HEK293 (cell line): ENCODE measurements at regions of chr13 and their contacts with region 1.

Region 1: GRCh38 chr13:37109051-37109678 is 3.7 kb upstream of the CSNK1A1L start:
- H3K4me3 ChIP-seq: no peak overlapping the region
- H3K27ac ChIP-seq: no peak overlapping the region
- H3K4me1 ChIP-seq: no peaks in the 10 kb centered on the region
- CTCF ChIP-seq: no peak

Region 2: DNA sequence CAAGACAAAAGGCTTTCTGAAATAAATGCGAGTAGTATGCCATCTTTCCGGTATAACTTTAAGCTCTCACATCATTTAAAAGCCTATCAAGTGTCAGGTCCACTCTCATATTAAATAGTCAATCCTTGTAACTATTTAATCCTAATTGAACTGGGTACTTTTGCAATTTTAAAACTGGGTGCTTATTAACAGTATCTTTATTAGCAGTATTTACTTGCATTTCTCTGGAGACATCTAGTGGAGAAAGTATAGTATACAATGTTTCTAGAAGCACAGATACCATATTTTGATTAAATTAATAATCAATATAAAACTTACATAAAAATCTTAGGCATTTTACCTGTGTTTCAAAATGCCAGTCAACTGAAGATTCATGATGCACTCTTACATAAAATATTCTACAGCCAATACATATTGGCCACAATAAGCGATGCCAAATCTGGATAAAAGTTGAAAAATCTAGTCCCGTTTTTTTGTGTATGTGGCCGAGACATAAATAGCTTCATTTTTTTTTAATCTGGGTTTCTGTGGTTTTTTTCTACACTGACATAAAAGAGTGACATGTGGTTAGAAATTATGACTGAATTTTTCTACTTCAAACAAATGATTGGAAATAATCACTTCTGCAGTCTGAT is 493.7 kb after region 1 on chr13:
- CTCF ChIA-PET with region 1: interaction called, 10 read pairs
- POLR2A ChIA-PET with region 1: no interaction called
- H3K4me3 ChIP-seq: no peak overlapping the region
- H3K27ac ChIP-seq: no peak overlapping the region
- H3K4me1 ChIP-seq: no peaks in the 10 kb centered on the region
- CTCF ChIP-seq: no peak